GM10248 (cell line): ENCODE measurements at regions of chr11 and their contacts with region 1.

Region 1: DNA sequence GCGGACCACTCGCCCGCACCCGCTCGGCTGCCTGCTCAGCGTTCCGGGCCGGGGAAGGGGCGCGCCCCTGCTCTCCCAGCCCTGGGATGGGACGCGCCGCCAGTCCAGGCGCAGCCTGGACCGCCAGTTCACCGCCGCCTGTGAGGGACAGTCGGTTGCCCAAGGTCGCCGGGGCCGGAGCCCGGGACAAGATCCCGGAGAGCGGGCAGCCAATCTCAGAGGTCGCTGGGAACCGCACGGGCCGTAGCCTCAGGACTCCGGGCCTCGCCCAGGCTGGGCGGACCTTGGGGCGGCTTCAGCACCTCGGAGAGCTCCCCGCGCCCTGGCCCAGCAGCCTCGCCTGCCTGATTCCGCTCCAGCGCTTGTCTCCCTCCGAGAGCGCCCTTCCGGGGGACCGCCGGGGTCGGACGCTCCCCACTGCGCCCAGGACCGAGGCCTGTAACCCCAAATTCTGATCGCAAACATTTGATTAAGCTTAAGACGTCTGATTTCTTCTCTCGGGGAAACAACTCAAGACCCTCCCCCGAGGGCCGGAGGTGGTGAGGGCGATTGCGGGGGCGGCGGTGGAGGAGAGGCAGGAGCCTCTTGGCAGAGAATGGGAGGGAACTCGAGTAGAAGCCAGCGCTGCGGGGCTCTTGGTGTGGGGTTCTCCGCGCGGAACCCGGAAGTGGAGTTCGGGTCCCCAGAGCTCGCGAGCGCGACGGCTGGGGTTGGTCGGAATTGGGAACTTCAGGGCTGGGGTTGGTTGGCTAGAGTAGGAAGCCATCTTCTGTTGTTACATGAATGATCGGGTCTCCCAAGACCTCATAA is 1.1 kb upstream of the CHRM4 start:
- DNase-seq: peak; percentile 95
- CTCF ChIP-seq: no peak

Region 2: GRCh38 chr11:45354976-45355705 is 1037.5 kb before region 1 on chr11:
- CTCF ChIA-PET with region 1: no interaction called
- POLR2A ChIA-PET with region 1: no interaction called
- DNase-seq: peak; percentile 70
- CTCF ChIP-seq: no peak

Region 3: DNA sequence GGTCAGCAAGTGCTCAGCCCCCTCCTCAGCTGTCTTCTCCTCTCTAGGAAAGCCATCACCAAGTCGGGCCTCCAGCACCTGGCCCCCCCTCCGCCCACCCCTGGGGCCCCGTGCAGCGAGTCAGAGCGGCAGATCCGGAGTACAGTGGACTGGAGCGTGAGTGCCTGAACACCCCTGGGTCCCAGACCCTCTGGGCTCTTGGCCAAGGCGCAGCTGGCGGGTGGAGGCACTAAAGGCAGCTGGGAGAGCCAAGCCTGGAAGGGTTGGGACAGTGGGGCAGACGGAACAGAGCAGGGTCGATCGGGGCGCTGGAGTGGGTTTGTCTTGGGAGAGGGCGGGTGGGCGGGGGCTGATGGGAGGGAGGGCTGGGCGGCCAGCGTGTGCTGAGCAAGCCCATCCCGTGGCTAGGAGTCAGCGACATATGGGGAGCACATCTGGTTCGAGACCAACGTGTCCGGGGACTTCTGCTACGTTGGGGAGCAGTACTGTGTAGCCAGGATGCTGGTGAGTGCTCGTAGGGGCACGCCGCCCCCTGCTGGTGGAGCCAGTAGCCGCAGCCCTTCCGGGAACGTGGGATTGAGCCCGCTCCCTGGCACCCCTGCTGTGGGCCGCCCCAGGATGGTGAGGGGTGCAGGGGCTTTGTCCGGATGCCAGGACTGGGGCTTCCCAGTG is 25.2 kb before region 1 on chr11:
- CTCF ChIA-PET with region 1: interaction called, 18 read pairs
- POLR2A ChIA-PET with region 1: interaction called, 3 read pairs
- DNase-seq: peak; percentile 81
- CTCF ChIP-seq: peak; percentile 93

Region 4: GRCh38 chr11:46410021-46410420 is 17.4 kb after region 1 on chr11:
- CTCF ChIA-PET with region 1: interaction called, 15 read pairs
- POLR2A ChIA-PET with region 1: no interaction called
- DNase-seq: no peak
- CTCF ChIP-seq: peak; percentile 8

Region 5: DNA sequence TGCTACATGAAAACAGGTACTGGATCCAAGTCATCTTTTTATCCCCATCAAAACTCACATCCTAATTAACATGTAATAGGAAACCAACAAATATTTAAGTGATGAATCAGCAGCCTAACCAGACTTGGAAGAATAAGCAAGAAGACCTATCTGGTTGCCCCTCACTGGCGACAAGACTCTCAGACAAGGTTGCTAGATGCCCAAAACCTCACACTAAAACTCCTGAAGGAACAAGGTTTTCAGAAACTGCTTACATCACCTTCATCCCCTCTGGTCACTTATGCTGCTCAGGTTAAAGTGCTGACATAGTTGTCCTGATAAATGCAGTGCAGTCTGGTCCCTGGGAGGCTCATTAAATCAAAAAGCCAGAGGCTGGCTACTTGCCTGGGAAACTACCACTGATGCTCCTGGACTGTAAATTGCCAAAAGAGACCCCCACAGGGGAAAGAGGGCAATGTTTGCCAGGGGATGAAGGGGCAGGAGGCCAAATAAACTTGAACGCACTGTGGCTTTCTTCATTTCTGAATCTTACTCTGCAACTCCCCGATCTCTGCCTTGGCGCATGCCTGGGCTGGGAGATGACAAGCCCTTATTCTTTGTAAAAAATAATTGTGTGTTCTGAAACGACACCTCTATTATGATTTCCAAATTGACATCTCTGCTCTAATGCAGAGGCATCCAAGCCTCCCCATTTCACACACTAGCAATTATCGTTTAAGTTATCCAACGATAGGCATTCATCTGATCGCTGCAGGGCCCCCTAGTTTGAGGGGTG is 128.5 kb after region 1 on chr11:
- CTCF ChIA-PET with region 1: interaction called, 15 read pairs
- POLR2A ChIA-PET with region 1: no interaction called
- DNase-seq: no peak
- CTCF ChIP-seq: no peak

Region 6: GRCh38 chr11:46554205-46555055 is 161.8 kb after region 1 on chr11:
- CTCF ChIA-PET with region 1: interaction called, 18 read pairs
- POLR2A ChIA-PET with region 1: interaction called, 5 read pairs
- DNase-seq: no peak
- CTCF ChIP-seq: no peak

Region 7: GRCh38 chr11:46616998-46617675 is 224.5 kb after region 1 on chr11 and contains the starts of genes ATG13 and HARBI1:
- CTCF ChIA-PET with region 1: interaction called, 10 read pairs
- POLR2A ChIA-PET with region 1: no interaction called
- DNase-seq: peak; percentile 93
- CTCF ChIP-seq: no peak